Calu3 (cell line): ENCODE measurements at regions of chr3 and their contacts with region 1.

Region 1: DNA sequence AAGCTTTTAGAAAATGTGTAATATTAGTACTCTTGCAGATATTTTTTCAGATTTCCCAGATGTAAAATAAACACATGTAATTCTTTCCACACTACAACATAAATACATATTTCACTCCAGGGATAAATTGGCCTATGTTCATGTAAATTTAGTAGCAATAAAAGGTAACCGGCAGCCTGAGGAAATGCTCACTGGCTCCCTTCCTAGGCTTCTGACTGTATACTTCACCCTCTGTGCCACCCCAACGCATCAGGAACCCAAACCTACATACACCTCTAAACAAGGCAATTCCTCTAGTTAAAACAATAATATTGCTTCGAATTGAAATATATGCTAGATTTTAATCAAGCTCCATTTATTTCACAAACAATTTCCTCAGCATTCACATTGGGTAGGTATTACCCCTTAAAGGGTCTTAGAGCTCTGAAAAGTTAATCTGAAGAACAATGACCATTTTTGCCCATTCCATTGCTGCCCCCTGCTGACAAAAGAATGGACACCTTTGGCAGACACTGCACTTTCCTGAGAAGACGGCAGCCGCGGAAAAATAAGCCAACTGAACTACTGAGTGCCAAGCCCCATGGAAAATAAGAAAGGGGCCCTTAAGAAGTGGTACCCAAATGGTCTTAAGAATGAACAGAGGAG is 212.5 kb downstream of the OSBPL10 start:
- DNase-seq: peak; percentile 42
- H3K4me3 Mint-ChIP-seq: no peak overlapping the region
- H3K27ac Mint-ChIP-seq: no peak overlapping the region
- H3K4me1 Mint-ChIP-seq: peaks cover 8% of the 10 kb centered on the region
- H3K27me3 Mint-ChIP-seq: no peaks in the 10 kb centered on the region
- CTCF ChIP-seq: peak; percentile 43

Region 2: DNA sequence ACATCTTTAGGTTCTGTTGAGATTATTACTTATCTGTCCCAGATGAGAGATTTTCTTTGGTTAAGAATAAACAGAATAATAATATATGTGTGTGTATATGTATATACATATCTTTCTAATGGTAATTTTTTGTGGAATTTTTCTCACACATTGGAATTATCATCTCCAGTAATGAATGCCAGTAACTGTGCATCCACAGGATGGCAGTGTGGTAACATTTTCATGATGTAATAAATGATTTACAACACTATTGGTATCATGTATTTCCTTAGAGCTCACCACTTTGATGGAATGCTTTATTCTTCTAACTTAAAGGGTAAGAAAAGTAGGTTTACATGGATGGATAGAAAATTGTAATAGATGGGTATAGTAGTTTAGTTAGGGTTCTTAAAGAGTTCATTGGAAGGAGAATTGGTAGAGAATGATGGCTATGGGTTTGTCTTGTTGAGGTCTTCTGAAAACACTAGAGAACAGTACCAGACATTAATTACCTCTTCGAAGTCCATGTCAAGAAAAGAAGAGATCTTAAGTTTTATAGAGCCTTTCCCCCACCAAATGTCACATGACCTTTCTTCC is 157.8 kb before region 1 on chr3:
- CTCF ChIA-PET with region 1: interaction called, 6 read pairs
- intact Hi-C with region 1: loop called (anchors 10 kb)
- DNase-seq: peak; percentile 17
- H3K4me3 Mint-ChIP-seq: no peak overlapping the region
- H3K27ac Mint-ChIP-seq: no peak overlapping the region
- H3K4me1 Mint-ChIP-seq: peaks cover 9% of the 10 kb centered on the region
- H3K27me3 Mint-ChIP-seq: no peaks in the 10 kb centered on the region
- CTCF ChIP-seq: no peak